ENCODE measurements at regions of chr7 and their contacts with region 1.

Region 1: DNA sequence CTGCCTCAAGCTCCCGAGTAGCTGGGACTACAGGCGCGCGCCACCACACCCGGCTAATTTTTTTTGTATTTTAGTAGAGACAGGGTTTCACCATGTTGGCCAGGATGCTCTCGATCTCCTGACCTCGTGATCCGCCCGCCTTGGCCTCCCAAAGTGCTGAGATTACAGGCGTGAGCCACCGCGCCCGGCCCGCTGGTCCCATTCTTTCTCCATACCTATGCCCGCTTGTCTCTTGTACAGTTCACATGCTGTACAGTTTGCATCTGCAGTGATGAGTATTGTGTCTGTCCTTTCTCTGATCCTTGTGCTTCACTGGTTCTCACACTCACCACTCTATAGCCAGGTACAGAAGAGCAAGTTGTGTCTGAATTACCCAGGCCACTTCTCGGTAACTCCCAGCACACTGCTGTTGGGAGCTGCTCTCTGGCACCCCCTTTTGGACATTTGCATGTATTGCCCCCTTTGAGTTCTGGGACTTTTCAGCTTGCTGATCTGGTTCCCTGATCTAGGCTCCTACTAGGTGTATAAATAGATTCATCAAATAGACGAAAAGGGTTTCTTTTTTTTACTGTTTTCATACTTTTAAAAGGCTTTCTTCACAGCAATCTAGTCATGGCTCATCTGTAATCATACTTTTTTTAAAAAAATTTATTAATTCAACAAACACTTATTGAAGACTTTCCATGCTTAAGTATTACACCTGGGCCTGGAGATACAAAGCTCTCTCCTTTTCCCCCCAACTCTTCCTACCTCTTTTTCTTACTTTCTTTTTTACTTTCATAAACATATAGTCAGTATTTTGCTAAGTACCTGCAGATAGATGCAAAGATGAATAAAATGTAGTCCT is 53.5 kb downstream of the AOAH start:
- DNase-seq: peak; percentile 80
- ATAC-seq: peak; percentile 80
- H3K4me3 Mint-ChIP-seq: no peak overlapping the region
- H3K27ac Mint-ChIP-seq: peak overlapping the region; percentile 80
- H3K4me1 Mint-ChIP-seq: peaks cover 61% of the 10 kb centered on the region
- H3K27me3 Mint-ChIP-seq: no peaks in the 10 kb centered on the region

Region 2: DNA sequence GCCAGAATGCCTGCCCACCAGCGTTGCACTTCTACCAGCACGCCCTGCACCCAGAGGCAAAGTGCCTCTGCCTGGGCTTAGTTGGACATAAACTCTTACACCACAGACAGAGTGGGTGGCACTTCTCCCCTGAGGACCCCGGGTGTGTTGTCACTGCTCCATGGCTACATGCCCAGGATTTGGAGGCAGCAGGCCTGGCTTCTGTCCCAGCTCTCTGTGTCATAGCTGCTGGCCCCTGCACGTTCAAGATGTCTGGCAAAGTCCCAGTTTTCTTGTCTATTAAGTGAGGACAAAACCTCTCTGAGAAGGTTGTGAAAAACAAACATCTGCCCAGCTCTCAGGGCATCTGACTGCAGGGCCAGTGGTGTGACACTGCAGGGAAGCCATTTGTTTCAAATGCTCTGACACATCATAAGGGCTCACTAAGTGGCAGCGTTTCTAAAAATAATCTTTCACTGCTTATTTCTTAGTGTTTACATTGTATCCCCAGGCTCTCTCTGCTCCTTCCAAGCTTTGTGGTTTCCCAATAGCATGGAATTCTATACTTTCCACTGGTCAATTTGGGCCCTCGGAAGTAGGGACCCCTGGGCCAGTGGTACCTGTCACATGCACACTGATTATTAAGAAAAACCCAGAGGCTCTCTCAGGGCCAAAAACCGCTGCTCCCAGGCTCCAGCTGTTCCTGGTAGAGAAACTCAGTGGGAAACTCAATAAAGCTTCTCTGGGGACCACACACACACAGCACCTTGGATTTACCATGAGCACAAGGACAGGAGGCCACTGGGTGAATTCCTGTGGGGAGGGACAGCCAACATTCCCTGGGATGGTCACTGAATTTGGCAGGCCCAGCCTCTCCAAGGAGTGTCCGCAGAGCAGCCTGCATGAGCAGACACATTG is 367.4 kb before region 1 on chr7:
- CTCF ChIA-PET with region 1: no interaction called
- POLR2A ChIA-PET with region 1: no interaction called
- intact Hi-C with region 1: no loop called
- DNase-seq: no peak
- ATAC-seq: no peak
- H3K4me3 Mint-ChIP-seq: no peak overlapping the region
- H3K27ac Mint-ChIP-seq: no peak overlapping the region
- H3K4me1 Mint-ChIP-seq: no peaks in the 10 kb centered on the region
- H3K27me3 Mint-ChIP-seq: no peaks in the 10 kb centered on the region

Region 3: GRCh38 chr7:36583318-36583717 is 87.5 kb before region 1 on chr7:
- CTCF ChIA-PET with region 1: interaction called, 14 read pairs
- POLR2A ChIA-PET with region 1: no interaction called
- intact Hi-C with region 1: loop called in 1 of 2 experiments (anchors 2 kb)
- DNase-seq: no peak
- ATAC-seq: peak; percentile 87
- H3K4me3 Mint-ChIP-seq: no peak overlapping the region
- H3K27ac Mint-ChIP-seq: peak overlapping the region; percentile 79
- H3K4me1 Mint-ChIP-seq: peaks cover 19% of the 10 kb centered on the region
- H3K27me3 Mint-ChIP-seq: no peaks in the 10 kb centered on the region

Region 4: DNA sequence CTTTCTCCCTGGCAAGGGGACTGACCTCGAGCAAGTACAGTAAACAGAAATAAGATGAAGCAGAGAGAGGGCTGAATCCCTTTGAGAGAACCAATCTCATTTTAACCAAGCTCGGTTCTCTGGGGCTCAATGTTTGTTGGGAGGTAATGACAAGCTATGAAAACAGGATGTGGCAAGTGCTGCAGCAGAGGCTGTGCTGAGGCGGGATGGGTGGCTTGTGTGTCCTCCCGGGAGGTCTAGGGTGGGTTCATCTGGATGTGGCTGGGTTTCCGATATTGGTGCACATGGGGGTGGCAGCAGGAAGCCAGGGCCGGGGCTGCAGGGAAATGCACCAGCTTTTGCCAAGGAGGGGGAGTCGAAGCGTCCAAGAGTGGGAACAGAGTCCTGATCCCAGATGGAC is 31.0 kb before region 1 on chr7:
- CTCF ChIA-PET with region 1: interaction called, 15 read pairs
- POLR2A ChIA-PET with region 1: no interaction called
- intact Hi-C with region 1: no loop called
- DNase-seq: peak; percentile 59
- ATAC-seq: peak; percentile 89
- H3K4me3 Mint-ChIP-seq: peak overlapping the region; percentile 9
- H3K27ac Mint-ChIP-seq: peak overlapping the region; percentile 69
- H3K4me1 Mint-ChIP-seq: peaks cover 75% of the 10 kb centered on the region
- H3K27me3 Mint-ChIP-seq: no peaks in the 10 kb centered on the region

Region 5: DNA sequence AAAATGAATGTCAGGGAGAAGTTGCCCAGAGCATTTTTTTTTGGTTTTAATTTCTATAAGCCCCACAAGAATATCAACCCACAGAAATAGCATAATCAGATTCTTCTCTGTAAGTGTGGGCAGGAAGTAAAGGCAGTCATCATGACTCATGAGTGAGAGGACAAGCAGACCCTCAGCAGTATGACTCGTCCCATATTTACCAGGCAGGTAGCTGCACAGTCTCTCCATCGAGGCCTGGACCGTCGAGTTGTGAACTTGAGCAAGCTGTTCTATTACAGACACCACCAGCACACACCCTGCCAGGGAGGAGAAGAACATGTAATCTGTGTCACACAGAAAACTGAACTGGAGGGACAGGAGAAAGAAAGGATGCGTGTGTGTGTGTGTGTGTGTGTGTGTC is 15.7 kb after region 1 on chr7:
- CTCF ChIA-PET with region 1: interaction called, 20 read pairs
- POLR2A ChIA-PET with region 1: no interaction called
- intact Hi-C with region 1: no loop called
- DNase-seq: peak; percentile 67
- ATAC-seq: peak; percentile 78
- H3K4me3 Mint-ChIP-seq: no peak overlapping the region
- H3K27ac Mint-ChIP-seq: peak overlapping the region; percentile 69
- H3K4me1 Mint-ChIP-seq: peaks cover 80% of the 10 kb centered on the region
- H3K27me3 Mint-ChIP-seq: no peaks in the 10 kb centered on the region

Region 6: DNA sequence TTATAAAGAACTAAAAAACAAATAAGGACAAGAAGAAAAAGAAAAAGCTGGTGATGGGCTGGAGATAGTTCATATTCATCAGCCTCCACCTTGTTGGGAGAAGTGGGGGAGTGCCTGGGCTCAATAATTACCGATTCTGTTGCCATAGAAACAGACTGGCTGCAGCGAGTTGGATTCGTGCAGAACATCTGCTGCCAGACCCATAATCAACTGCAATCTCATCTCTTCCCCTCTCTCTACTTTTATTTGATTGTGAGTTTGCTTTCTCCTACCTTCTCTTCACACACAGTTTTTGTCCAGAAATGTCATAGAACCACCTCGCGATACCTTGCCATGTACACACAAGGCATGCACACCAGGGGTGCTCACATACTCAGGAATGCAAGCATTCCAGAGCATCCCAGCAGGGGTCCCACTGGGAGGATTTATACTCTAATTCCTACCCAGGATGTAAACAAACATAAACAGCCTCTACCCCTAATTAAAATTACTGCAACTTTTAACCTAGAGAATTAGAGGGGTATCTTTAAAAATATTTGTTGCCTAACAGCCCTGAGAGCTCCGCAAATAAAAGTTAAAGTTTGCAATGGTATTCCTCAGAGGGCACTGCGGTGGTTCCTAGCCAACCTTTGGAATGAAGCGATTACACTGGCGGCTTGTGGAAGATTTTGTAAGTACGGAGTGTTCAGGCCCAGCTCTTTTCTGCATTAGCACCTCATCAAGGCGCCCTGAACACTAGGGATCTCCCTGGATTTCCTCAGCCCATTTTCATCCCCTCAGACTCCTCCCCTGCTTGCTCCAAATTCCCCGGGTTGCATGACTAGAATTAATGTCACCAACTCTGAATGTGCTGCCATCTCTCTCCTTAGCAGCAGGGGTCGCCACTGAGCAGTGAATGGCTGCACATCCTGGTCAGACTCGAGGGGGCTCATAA is 315.9 kb after region 1 on chr7:
- CTCF ChIA-PET with region 1: no interaction called
- POLR2A ChIA-PET with region 1: no interaction called
- intact Hi-C with region 1: no loop called
- DNase-seq: peak; percentile 80
- ATAC-seq: peak; percentile 74
- H3K4me3 Mint-ChIP-seq: no peak overlapping the region
- H3K27ac Mint-ChIP-seq: no peak overlapping the region
- H3K4me1 Mint-ChIP-seq: peaks cover 23% of the 10 kb centered on the region
- H3K27me3 Mint-ChIP-seq: no peaks in the 10 kb centered on the region

Region 7: DNA sequence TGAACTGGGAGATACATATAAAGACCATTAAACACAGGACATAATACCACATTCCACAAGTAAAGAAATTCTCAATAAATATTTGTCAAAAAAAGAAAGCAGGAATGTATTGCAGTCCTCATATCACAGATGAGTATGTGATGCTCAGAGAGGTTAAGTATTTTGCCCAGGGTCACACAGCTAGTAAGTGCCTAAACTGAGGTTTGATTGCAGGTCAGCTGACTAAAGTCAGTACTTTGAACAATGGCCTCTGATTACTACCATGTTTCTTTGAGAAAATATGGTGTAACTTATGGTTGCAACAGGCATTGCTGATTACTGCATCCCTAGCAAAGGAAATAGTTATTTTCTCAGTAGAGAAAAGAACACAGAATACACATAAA is 510.7 kb after region 1 on chr7:
- CTCF ChIA-PET with region 1: interaction called, 16 read pairs
- POLR2A ChIA-PET with region 1: no interaction called
- intact Hi-C with region 1: loop called in 1 of 2 experiments (anchors 5 kb)
- DNase-seq: no peak
- ATAC-seq: no peak
- H3K4me3 Mint-ChIP-seq: no peak overlapping the region
- H3K27ac Mint-ChIP-seq: no peak overlapping the region
- H3K4me1 Mint-ChIP-seq: peaks cover 7% of the 10 kb centered on the region
- H3K27me3 Mint-ChIP-seq: no peaks in the 10 kb centered on the region

Measured in activated CD4-positive, alpha-beta T cell treated with anti-CD3 and anti-CD28 coated beads for 36 hours (primary cell).